K562 (cell line): ENCODE measurements at regions of chr9 and their contacts with region 1.

Region 1: GRCh38 chr9:137034863-137035761 is 3.2 kb upstream of the FUT7 start:
- DNase-seq: peak; percentile 80 to 90 (median 81)
- ATAC-seq: peak; percentile 98
- H3K4me3 ChIP-seq: no peak overlapping the region
- H3K27ac ChIP-seq: no peak overlapping the region
- H3K4me1 ChIP-seq: peaks cover 0 to 69% of the 10 kb centered on the region in 2 experiments; a peak in 3 of 5 replicates
- H3K27me3 ChIP-seq: peaks cover 0 to 14% of the 10 kb centered on the region in 2 experiments; a peak in 1 of 5 replicates
- CTCF ChIP-seq: peak; percentile 94 to 95 (median 95)
- EP300 ChIP-seq: no peak
- POLR2A ChIP-seq: no peak
- RAD21 ChIP-seq: peak; percentile 85 to 95

Region 2: DNA sequence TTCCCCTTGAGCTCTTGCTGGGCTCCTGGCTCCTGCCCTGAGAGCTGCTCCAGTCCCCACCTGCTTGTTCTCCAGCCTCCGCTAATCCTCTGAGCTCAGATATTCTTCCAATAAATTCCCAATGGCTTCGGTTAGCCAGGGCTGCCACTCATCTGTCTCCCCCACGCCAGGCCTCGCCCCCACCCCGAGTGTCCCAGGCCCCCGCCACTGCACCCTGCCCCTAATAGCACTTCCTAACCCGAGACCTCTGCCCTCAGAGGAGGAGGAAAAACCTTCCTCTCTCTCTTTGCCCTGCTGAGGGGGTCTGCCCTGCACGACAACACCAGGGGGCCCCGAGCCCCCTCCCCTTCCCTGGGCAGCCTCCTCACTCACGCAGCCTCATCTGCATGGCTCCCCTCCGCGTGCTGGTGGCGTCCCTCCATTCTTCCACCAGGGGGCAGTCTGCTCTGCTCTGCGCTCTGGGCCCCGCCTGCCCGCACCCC is 265.4 kb before region 1 on chr9:
- CTCF ChIA-PET with region 1: no interaction called
- POLR2A ChIA-PET with region 1: no interaction called
- in situ Hi-C with region 1: loop called (anchors 5 kb)
- intact Hi-C with region 1: no loop called
- DNase-seq: peak; percentile 67 to 78 (median 72)
- ATAC-seq: peak; percentile 93
- H3K4me3 ChIP-seq: no peak overlapping the region
- H3K27ac ChIP-seq: no peak overlapping the region
- H3K4me1 ChIP-seq: peaks cover 10 to 20% of the 10 kb centered on the region in 2 experiments; a peak in 4 of 5 replicates
- H3K27me3 ChIP-seq: peaks cover 0 to 5% of the 10 kb centered on the region in 2 experiments; a peak in 1 of 5 replicates
- CTCF ChIP-seq: peak; percentile 61 to 80 (median 69)
- EP300 ChIP-seq: no peak
- POLR2A ChIP-seq: no peak
- RAD21 ChIP-seq: peak in 1 of 2 experiments; percentile 31; a peak in 1 of 4 replicates

Region 3: GRCh38 chr9:136944519-136945279 is 90.4 kb before region 1 on chr9 and contains the starts of genes C8G and FBXW5:
- CTCF ChIA-PET with region 1: interaction called, 47 read pairs
- POLR2A ChIA-PET with region 1: interaction called, 8 read pairs
- in situ Hi-C with region 1: loop called (anchors 5 kb)
- intact Hi-C with region 1: loop called (anchors 1 kb)
- DNase-seq: peak; percentile 96 to 99 (median 98)
- ATAC-seq: peak; percentile 78
- H3K4me3 ChIP-seq: peak within 1 kb of the TSS; percentile 95
- H3K27ac ChIP-seq: peak within 1 kb of the TSS; percentile 91
- H3K4me1 ChIP-seq: peaks cover 24 to 93% of the 10 kb centered on the region in 2 experiments
- H3K27me3 ChIP-seq: no peaks in the 10 kb centered on the region
- CTCF ChIP-seq: peak; percentile 93 to 98 (median 94)
- EP300 ChIP-seq: peak; percentile 59
- POLR2A ChIP-seq: 0 out of 2 replicates have a peak, but pooled peaks have one; percentile 34
- RAD21 ChIP-seq: peak in 1 of 2 experiments; percentile 41; a peak in 2 of 4 replicates
- polyA plus RNA-seq, gene C8G: 0.38 TPM in 1 of 2 experiments, not detected in the other
- polyA plus RNA-seq, gene FBXW5: 0.21 to 1.2 TPM

Region 4: GRCh38 chr9:136949817-136950655 is 85.1 kb before region 1 on chr9:
- CTCF ChIA-PET with region 1: interaction called, 47 read pairs
- POLR2A ChIA-PET with region 1: interaction called, 8 read pairs
- in situ Hi-C with region 1: loop called (anchors 5 kb)
- intact Hi-C with region 1: loop called (anchors 1 kb)
- DNase-seq: peak; percentile 97 to 100 (median 100)
- ATAC-seq: peak; percentile 94
- H3K4me3 ChIP-seq: peak overlapping the region; percentile 51
- H3K27ac ChIP-seq: peak overlapping the region; percentile 46; the same call in 2 of the 3 replicates
- H3K4me1 ChIP-seq: peaks cover 13 to 82% of the 10 kb centered on the region in 2 experiments
- H3K27me3 ChIP-seq: peaks cover 0 to 2% of the 10 kb centered on the region in 2 experiments; a peak in 1 of 5 replicates
- CTCF ChIP-seq: peak in 2 of 3 experiments; percentile 29 to 35; a peak in 4 of 6 replicates
- EP300 ChIP-seq: no peak
- POLR2A ChIP-seq: peak; percentile 67
- RAD21 ChIP-seq: no peak; a peak in 2 of 4 replicates

Region 5: DNA sequence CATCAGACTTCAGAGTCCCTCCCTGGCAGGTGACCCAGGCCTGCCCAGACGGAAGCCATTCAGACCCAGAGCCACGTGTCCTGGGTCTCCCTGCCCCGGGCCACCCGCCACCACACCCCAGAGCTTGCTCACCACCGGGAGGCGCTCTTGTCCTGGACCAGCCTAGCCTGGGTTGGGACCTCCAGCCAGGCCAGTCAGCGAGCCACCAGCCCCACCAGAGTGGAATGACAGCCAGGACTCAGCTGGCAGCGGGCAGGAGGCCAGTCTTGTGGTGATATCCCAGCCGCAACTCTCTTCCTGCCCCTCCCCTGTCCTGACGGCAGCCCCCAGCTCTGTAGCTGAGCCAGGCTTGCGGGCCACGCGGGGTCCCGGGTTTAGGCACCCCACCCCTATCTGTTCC is 59.5 kb before region 1 on chr9:
- CTCF ChIA-PET with region 1: no interaction called
- POLR2A ChIA-PET with region 1: no interaction called
- in situ Hi-C with region 1: no loop called
- intact Hi-C with region 1: loop called (anchors 2 kb)
- DNase-seq: peak; percentile 52 to 62 (median 58)
- ATAC-seq: peak; percentile 45
- H3K4me3 ChIP-seq: no peak overlapping the region
- H3K27ac ChIP-seq: no peak overlapping the region
- H3K4me1 ChIP-seq: peaks cover 9 to 92% of the 10 kb centered on the region in 2 experiments; a peak in 4 of 5 replicates
- H3K27me3 ChIP-seq: no peaks in the 10 kb centered on the region
- CTCF ChIP-seq: peak; percentile 61 to 77 (median 66)
- EP300 ChIP-seq: no peak
- POLR2A ChIP-seq: no peak
- RAD21 ChIP-seq: peak in 1 of 2 experiments; percentile 39; a peak in 2 of 4 replicates

Region 6: GRCh38 chr9:137000177-137000883 is 34.8 kb before region 1 on chr9:
- CTCF ChIA-PET with region 1: interaction called, 3 read pairs
- POLR2A ChIA-PET with region 1: no interaction called
- in situ Hi-C with region 1: no loop called
- intact Hi-C with region 1: loop called (anchors 1 kb)
- DNase-seq: no peak
- ATAC-seq: no peak
- H3K4me3 ChIP-seq: no peak overlapping the region
- H3K27ac ChIP-seq: no peak overlapping the region
- H3K4me1 ChIP-seq: peaks cover 22 to 39% of the 10 kb centered on the region in 2 experiments; a peak in 4 of 5 replicates
- H3K27me3 ChIP-seq: no peaks in the 10 kb centered on the region
- CTCF ChIP-seq: no peak
- EP300 ChIP-seq: no peak
- POLR2A ChIP-seq: no peak
- RAD21 ChIP-seq: no peak